ENCODE measurements at regions of chr1 and their contacts with region 1.

Region 1: DNA sequence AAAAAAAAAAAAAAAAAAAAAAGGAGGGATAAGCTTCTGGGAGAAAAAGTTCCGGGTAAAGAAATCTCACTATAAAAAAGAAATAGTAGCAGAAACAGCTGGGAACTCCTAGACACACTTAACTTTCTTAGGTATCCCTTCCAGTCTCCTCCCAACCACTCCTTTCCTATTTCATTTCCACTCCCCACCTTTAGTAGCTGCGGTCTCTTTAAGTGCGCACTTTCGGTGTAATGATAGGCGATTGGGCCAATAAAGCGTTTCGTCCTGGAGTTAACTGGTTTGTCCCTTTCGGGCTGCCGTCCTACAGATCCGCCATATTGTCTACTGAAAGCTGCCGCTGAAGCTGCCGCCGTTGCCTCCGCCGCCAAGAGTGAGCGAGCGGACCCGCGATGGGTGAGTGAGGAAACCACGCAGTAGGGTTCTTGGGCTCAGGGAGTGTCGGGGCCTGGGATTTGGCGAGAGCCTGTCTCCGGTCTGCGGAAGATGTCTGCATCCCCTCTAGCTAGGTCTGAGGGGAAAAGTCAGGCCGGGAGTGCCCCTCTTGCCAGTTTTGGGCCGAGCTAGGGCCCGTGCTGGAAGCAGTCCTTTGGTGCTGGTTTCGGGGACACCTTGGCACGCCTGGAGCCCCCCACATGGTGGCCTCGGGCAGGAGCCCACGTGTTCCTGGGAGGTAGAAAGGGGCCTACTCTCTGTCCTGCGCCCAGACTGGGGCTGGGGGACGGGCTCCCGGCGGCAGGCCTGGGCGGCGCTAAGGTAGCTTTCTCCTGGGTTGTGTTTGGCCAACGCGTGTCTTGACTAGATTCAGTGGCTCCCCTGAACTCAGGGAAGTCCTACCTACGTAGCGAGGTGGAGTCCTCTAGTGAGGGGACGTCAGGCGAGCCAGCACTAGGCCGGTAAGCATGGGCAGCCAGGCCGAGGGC is at the start of gene KPNA6:
- DNase-seq: peak; percentile 82 to 97 (median 88)
- ATAC-seq: peak; percentile 82 to 88 (median 84)
- H3K4me3 ChIP-seq: peak within 1 kb of the TSS; percentile 81 to 99
- H3K4me3 Mint-ChIP-seq: peak within 1 kb of the TSS; percentile 95 to 100 (median 99)
- H3K27ac ChIP-seq: peak within 1 kb of the TSS; percentile 89
- H3K27ac Mint-ChIP-seq: peak within 1 kb of the TSS; percentile 99
- H3K4me1 ChIP-seq: peaks cover 26 to 42% of the 10 kb centered on the region in 2 experiments
- H3K4me1 Mint-ChIP-seq: peaks cover 41 to 55% (median 48%) of the 10 kb centered on the region in 3 donors
- H3K27me3 ChIP-seq: no peaks in the 10 kb centered on the region
- H3K27me3 Mint-ChIP-seq: no peaks in the 10 kb centered on the region
- total RNA-seq, gene KPNA6: 46.2 to 53.6 (median 52.3) TPM

Region 2: DNA sequence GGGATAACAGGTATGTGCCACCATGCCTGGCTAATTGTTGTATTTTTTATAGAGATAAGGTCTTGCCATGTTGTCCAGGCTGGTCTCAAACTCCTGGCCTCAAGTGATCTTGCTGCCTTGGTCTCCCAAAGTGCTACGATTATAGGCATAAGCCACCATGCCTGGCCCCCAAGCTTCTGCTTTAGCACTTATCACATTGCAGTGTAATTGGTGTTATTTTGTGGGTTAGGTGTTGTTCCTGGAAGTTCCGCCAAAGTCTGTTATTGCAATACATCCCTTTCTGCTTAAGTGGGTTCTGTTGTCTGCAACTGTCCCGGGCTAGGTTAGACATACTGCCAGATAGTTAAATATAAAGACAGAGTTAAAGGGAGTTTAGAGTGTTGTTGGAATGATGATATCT is 807.8 kb before region 1 on chr1:
- CTCF ChIA-PET with region 1: no interaction called
- POLR2A ChIA-PET with region 1: interaction called in 1 of 2 experiments, 10 read pairs
- DNase-seq: peak in 9 of 35 experiments; percentile 3 to 33 (median 16)
- ATAC-seq: no peak
- H3K4me3 ChIP-seq: no peak overlapping the region
- H3K4me3 Mint-ChIP-seq: no peak overlapping the region
- H3K27ac ChIP-seq: no peak overlapping the region
- H3K27ac Mint-ChIP-seq: no peak overlapping the region
- H3K4me1 ChIP-seq: peaks cover 15 to 29% of the 10 kb centered on the region in 2 experiments
- H3K4me1 Mint-ChIP-seq: peaks cover 14 to 44% (median 35%) of the 10 kb centered on the region in 3 donors
- H3K27me3 ChIP-seq: no peaks in the 10 kb centered on the region
- H3K27me3 Mint-ChIP-seq: no peaks in the 10 kb centered on the region

Region 3: DNA sequence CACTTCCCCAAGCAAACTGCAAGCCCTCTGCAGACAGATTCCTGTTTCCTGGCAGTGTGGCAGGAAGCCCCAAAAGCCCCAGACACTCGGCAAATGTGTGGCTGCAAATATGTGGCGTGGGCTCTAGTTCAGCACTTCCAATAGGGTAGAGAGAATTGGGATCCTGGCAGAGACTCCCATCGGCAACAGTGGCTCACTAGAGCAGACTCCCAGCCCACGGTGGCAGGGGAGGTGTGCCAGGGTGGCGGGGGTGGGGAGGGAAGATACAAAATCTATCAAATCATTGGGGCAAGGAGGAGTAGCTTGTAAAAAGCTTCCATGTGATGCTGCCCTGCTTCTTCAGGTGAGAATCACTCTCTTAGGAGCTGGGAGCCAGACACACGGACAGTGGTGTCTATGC is 430.1 kb before region 1 on chr1:
- CTCF ChIA-PET with region 1: interaction called in 1 of 2 experiments, 11 read pairs
- POLR2A ChIA-PET with region 1: no interaction called
- DNase-seq: no peak
- ATAC-seq: no peak
- H3K4me3 ChIP-seq: no peak overlapping the region
- H3K4me3 Mint-ChIP-seq: no peak overlapping the region
- H3K27ac ChIP-seq: no peak overlapping the region
- H3K27ac Mint-ChIP-seq: no peak overlapping the region
- H3K4me1 ChIP-seq: no peaks in the 10 kb centered on the region
- H3K4me1 Mint-ChIP-seq: no peaks in the 10 kb centered on the region
- H3K27me3 ChIP-seq: peaks cover 0 to 31% of the 10 kb centered on the region in 2 experiments
- H3K27me3 Mint-ChIP-seq: peaks cover 0 to 9% of the 10 kb centered on the region in 2 donors

Region 4: GRCh38 chr1:32055416-32055815 is 52.6 kb before region 1 on chr1:
- CTCF ChIA-PET with region 1: no interaction called
- POLR2A ChIA-PET with region 1: no interaction called
- DNase-seq: no peak
- ATAC-seq: no peak
- H3K4me3 ChIP-seq: no peak overlapping the region
- H3K4me3 Mint-ChIP-seq: no peak overlapping the region
- H3K27ac ChIP-seq: no peak overlapping the region
- H3K27ac Mint-ChIP-seq: peak overlapping the region; percentile 34 to 67
- H3K4me1 ChIP-seq: no peaks in the 10 kb centered on the region
- H3K4me1 Mint-ChIP-seq: no peaks in the 10 kb centered on the region
- H3K27me3 ChIP-seq: no peaks in the 10 kb centered on the region
- H3K27me3 Mint-ChIP-seq: no peaks in the 10 kb centered on the region

Region 5: GRCh38 chr1:32072622-32073298 is 35.2 kb before region 1 on chr1 and contains the start of gene TMEM39B:
- CTCF ChIA-PET with region 1: interaction called, 6 to 18 read pairs
- POLR2A ChIA-PET with region 1: interaction called in 1 of 2 experiments, 3 read pairs
- DNase-seq: peak; percentile 85 to 97 (median 93)
- ATAC-seq: peak; percentile 85 to 91 (median 86)
- H3K4me3 ChIP-seq: peak within 1 kb of the TSS; percentile 81 to 83
- H3K4me3 Mint-ChIP-seq: peak within 1 kb of the TSS; percentile 80 to 95 (median 86)
- H3K27ac ChIP-seq: peak within 1 kb of the TSS; percentile 71
- H3K27ac Mint-ChIP-seq: peak within 1 kb of the TSS; percentile 87 to 93
- H3K4me1 ChIP-seq: peaks cover 10 to 24% of the 10 kb centered on the region in 2 experiments
- H3K4me1 Mint-ChIP-seq: peaks cover 36 to 43% (median 39%) of the 10 kb centered on the region in 3 donors
- H3K27me3 ChIP-seq: no peaks in the 10 kb centered on the region
- H3K27me3 Mint-ChIP-seq: no peaks in the 10 kb centered on the region
- total RNA-seq, gene TMEM39B: 14.5 to 28.1 (median 24.5) TPM

Region 6: DNA sequence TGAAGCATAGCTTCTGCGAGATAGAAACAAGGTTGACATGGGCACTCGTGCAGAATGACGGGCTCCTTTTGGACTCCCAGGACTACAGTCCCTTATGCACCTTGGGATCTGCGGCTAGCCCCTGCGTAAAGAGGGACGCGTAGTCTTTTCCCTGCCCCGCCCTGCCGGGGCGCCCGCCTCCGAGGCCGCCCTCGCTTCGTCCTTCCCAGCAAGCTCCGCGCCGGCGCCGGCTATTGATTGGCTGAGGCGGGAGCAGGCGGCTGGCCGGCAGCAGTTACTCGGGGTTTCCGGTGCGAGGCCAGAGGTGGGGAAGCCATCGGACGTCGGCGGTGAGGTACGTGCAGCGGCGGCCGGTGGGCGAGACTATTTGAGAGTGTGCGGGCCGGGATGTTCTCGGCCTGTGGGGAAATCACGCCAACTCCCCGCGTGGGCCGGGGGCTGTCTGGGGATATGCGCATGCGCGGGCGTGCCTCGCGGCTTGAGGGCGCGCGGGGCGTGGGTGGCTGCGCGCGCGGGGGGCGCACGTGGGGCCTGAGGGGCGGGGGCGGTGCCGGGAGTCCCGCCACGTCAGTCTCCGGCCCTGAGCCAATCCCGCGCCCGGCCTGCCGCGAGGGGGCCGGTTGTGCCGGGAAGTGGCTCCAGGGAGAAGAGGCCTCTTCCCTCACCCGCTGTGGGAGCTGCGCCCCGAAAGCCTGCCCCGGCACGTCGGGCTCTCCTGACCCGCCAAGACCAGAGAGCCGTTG is 71.6 kb after region 1 on chr1 and contains the start of gene TXLNA:
- CTCF ChIA-PET with region 1: interaction called in 1 of 2 experiments, 6 read pairs
- POLR2A ChIA-PET with region 1: interaction called in 1 of 2 experiments, 17 read pairs
- DNase-seq: peak; percentile 56 to 91 (median 78)
- ATAC-seq: peak; percentile 89 to 92 (median 90)
- H3K4me3 ChIP-seq: peak within 1 kb of the TSS; percentile 86 to 91
- H3K4me3 Mint-ChIP-seq: peak within 1 kb of the TSS; percentile 87 to 93 (median 90)
- H3K27ac ChIP-seq: peak within 1 kb of the TSS; percentile 65
- H3K27ac Mint-ChIP-seq: peak within 1 kb of the TSS; percentile 94 to 95
- H3K4me1 ChIP-seq: peaks cover 7 to 37% of the 10 kb centered on the region in 2 experiments
- H3K4me1 Mint-ChIP-seq: peaks cover 39 to 44% (median 41%) of the 10 kb centered on the region in 3 donors
- H3K27me3 ChIP-seq: no peaks in the 10 kb centered on the region
- H3K27me3 Mint-ChIP-seq: no peaks in the 10 kb centered on the region
- total RNA-seq, gene TXLNA: 25.3 to 47.7 (median 43.8) TPM

Region 7: GRCh38 chr1:32195972-32196823 is 88.2 kb after region 1 on chr1:
- CTCF ChIA-PET with region 1: interaction called, 3 to 4 read pairs
- POLR2A ChIA-PET with region 1: interaction called in 1 of 2 experiments, 14 read pairs
- DNase-seq: peak in 1 of 35 experiments; percentile 50
- ATAC-seq: peak in 1 of 4 experiments; percentile 16
- H3K4me3 ChIP-seq: no peak overlapping the region
- H3K4me3 Mint-ChIP-seq: peak overlapping the region in 1 of 3 donors; percentile 64
- H3K27ac ChIP-seq: no peak overlapping the region
- H3K27ac Mint-ChIP-seq: peak overlapping the region; percentile 76 to 82
- H3K4me1 ChIP-seq: peaks cover 21 to 53% of the 10 kb centered on the region in 2 experiments
- H3K4me1 Mint-ChIP-seq: peaks cover 50 to 58% (median 55%) of the 10 kb centered on the region in 3 donors
- H3K27me3 ChIP-seq: no peaks in the 10 kb centered on the region
- H3K27me3 Mint-ChIP-seq: no peaks in the 10 kb centered on the region